PC-9 (cell line): ENCODE measurements at regions of chr13 and their contacts with region 1.

Region 1: GRCh38 chr13:44141725-44142539 is 231.7 kb upstream of the SERP2 start:
- DNase-seq: peak; percentile 91 to 99
- H3K4me3 ChIP-seq: peak overlapping the region; percentile 63
- H3K27ac ChIP-seq: peak overlapping the region; percentile 97
- H3K4me1 ChIP-seq: peaks cover 20% of the 10 kb centered on the region
- H3K27me3 ChIP-seq: no peaks in the 10 kb centered on the region
- CTCF ChIP-seq: no peak

Region 2: GRCh38 chr13:43933378-43933777 is 208.6 kb before region 1 on chr13:
- CTCF ChIA-PET with region 1: no interaction called
- POLR2A ChIA-PET with region 1: no interaction called
- intact Hi-C with region 1: no loop called
- DNase-seq: no peak
- H3K4me3 ChIP-seq: no peak overlapping the region
- H3K27ac ChIP-seq: no peak overlapping the region
- H3K4me1 ChIP-seq: no peaks in the 10 kb centered on the region
- H3K27me3 ChIP-seq: no peaks in the 10 kb centered on the region
- CTCF ChIP-seq: no peak

Region 3: DNA sequence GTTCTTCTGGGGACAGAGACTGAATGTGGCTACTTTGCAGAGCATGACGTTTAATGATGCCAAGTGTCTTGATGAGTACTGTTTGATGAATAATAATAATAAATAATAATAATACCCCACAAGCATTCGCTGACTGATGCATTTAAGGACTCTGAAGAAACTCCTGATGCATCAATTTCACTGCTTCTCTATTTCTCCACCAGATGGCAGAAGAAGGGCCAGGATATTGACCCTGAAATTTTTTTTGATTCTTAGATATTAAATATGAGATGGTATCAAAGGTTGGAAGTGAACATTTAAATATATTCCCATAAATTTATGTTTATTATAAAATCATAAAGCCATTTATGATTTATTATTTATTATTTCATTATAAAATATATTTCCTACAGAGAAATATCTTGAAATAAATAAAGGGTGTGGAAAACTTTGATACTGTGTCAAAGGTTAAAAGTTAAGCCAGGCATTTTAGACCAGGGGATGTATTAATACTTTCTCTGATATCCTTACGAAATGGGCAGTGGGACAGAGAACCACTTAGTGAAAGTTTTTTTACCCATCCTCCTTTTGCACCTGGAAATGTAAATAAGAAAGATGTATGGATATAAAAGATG is 91.4 kb before region 1 on chr13:
- CTCF ChIA-PET with region 1: no interaction called
- POLR2A ChIA-PET with region 1: interaction called, 4 read pairs
- intact Hi-C with region 1: loop called (anchors 1 kb)
- DNase-seq: no peak
- H3K4me3 ChIP-seq: no peak overlapping the region
- H3K27ac ChIP-seq: no peak overlapping the region
- H3K4me1 ChIP-seq: peaks cover 2% of the 10 kb centered on the region
- H3K27me3 ChIP-seq: no peaks in the 10 kb centered on the region
- CTCF ChIP-seq: peak; percentile 70

Region 4: DNA sequence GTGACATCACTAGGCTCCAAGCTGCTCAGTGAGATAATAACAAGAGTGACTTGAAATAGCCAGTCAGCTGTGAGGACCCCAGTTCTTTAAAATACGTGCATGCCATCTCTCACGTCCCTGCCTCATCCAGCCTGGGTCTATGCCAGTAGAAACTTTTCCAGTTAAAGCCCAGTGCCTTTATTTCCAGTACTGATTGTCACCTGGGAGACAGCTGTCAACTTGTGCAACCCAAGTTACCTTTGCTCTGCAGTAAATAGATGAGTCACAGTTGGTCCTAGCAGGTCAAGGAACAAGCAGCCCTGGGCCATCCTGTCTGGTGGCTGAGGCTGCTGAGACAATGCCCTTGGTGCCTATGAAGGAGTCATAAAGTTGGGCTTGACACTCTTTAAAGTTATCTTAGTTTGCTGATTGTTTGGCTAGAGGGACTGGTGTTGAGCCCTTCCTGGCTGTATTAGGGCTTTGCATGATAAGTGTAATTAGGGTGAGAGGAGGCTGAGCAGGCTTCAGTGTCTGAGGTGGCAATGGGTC is 33.5 kb before region 1 on chr13:
- CTCF ChIA-PET with region 1: no interaction called
- POLR2A ChIA-PET with region 1: interaction called, 9 read pairs
- intact Hi-C with region 1: loop called (anchors 5 kb)
- DNase-seq: peak; percentile 62 to 93
- H3K4me3 ChIP-seq: 0 out of 2 replicates have a peak overlapping the region, but pooled peaks have one; percentile 6
- H3K27ac ChIP-seq: peak overlapping the region; percentile 76
- H3K4me1 ChIP-seq: peaks cover 50% of the 10 kb centered on the region
- H3K27me3 ChIP-seq: no peaks in the 10 kb centered on the region
- CTCF ChIP-seq: no peak

Region 5: GRCh38 chr13:44231786-44232516 is 90.0 kb after region 1 on chr13:
- CTCF ChIA-PET with region 1: no interaction called
- POLR2A ChIA-PET with region 1: no interaction called
- intact Hi-C with region 1: loop called (anchors 1 kb)
- DNase-seq: peak; percentile 89 to 98
- H3K4me3 ChIP-seq: no peak overlapping the region; the same call in 1 of the 2 replicates
- H3K27ac ChIP-seq: peak overlapping the region; percentile 99
- H3K4me1 ChIP-seq: peaks cover 40% of the 10 kb centered on the region
- H3K27me3 ChIP-seq: no peaks in the 10 kb centered on the region
- CTCF ChIP-seq: no peak

Region 6: DNA sequence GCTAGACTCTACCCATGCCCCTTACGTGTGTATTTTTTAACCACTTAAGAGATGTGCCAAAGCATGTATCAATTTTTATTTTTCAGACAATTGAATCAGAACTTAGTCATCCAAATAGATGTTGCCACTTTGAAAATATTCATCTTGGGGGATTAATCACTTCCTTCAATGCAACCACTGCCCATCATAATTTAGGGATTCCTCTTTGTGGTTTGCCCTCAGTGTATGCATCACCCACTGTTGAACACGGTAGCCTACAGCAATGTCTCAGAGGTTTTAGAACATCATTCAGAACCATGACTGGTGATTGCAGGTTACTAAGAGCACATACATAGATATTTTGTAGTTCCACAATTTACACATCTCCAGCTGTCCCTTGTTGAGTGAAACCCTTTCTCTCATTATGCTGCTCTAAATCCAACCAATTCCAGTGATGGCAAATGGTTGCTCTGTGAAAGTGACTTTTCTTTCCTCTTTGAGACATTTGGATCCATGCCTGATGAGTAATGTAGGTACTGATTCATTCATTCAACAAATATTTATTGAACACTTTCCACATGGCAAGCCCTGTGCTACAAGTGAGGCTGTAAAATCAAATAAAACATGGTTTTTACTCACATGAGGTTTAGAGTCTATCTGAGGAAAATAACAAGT is 171.1 kb after region 1 on chr13:
- CTCF ChIA-PET with region 1: no interaction called
- POLR2A ChIA-PET with region 1: no interaction called
- intact Hi-C with region 1: loop called (anchors 5 kb)
- DNase-seq: peak; percentile 33 to 93
- H3K4me3 ChIP-seq: no peak overlapping the region
- H3K27ac ChIP-seq: peak overlapping the region; percentile 99
- H3K4me1 ChIP-seq: peaks cover 70% of the 10 kb centered on the region
- H3K27me3 ChIP-seq: no peaks in the 10 kb centered on the region
- CTCF ChIP-seq: no peak